H1 (cell line): ENCODE measurements at regions of chr10 and their contacts with region 1.

Region 1: GRCh38 chr10:97914837-97915211 is 65.2 kb downstream of the GOLGA7B start:
- DNase-seq: peak; percentile 46 to 95
- H3K4me3 ChIP-seq: no peak overlapping the region
- H3K27ac ChIP-seq: no peak overlapping the region
- H3K4me1 ChIP-seq: peaks cover 0 to 6% (median 1%) of the 10 kb centered on the region in 4 experiments; a peak in 2 of 7 replicates
- H3K27me3 ChIP-seq: peaks cover 0 to 6% (median 1%) of the 10 kb centered on the region in 4 experiments; a peak in 3 of 7 replicates
- CTCF ChIP-seq: peak; percentile 75 to 97 (median 87)
- EP300 ChIP-seq: 0 out of 3 replicates have a peak, but pooled peaks of 1 of the 2 experiments have one; percentile 24
- POLR2A ChIP-seq: no peak
- RAD21 ChIP-seq: peak; percentile 99

Region 2: DNA sequence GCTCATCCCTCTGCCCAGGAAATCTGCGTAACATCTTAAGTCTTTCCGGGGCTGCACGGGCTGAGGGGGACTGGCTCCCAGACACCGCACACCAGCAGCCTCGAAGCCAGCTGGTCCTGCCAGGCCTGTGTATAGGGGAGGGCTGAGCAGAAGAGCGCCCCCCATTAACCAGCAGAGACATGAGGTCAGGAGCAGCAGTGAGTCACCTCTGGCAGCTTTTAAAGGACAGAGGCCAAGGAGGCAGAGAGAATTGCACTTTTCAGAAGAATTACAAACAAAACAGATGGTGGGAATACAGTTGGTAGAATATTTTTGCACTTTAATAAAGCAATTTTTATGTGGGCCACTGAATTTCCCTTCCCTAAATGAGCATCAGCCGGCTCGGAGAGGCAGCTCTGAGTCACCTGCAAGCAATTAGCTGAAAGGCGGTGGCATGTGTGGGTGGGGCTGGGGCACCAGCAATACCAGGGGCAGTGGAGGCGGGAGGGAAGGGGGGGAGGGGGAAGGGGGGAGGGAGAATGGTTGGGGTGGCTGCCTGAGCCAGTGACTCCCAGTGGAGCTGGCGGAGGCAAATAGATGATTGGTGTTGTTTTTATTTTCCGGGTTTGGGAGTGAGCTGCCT is 26.1 kb before region 1 on chr10:
- CTCF ChIA-PET with region 1: interaction called, 11 read pairs
- POLR2A ChIA-PET with region 1: no interaction called
- DNase-seq: peak in 1 of 2 experiments; percentile 36
- H3K4me3 ChIP-seq: peak overlapping the region in 1 of 4 experiments; percentile 40; a peak in 1 of 8 replicates
- H3K27ac ChIP-seq: no peak overlapping the region
- H3K4me1 ChIP-seq: peaks cover 0 to 18% (median 13%) of the 10 kb centered on the region in 4 experiments; a peak in 6 of 7 replicates
- H3K27me3 ChIP-seq: no peaks in the 10 kb centered on the region; a peak in 1 of 7 replicates
- CTCF ChIP-seq: peak in 1 of 3 experiments; percentile 3; a peak in 1 of 4 replicates
- EP300 ChIP-seq: no peak
- POLR2A ChIP-seq: no peak
- RAD21 ChIP-seq: no peak

Region 3: DNA sequence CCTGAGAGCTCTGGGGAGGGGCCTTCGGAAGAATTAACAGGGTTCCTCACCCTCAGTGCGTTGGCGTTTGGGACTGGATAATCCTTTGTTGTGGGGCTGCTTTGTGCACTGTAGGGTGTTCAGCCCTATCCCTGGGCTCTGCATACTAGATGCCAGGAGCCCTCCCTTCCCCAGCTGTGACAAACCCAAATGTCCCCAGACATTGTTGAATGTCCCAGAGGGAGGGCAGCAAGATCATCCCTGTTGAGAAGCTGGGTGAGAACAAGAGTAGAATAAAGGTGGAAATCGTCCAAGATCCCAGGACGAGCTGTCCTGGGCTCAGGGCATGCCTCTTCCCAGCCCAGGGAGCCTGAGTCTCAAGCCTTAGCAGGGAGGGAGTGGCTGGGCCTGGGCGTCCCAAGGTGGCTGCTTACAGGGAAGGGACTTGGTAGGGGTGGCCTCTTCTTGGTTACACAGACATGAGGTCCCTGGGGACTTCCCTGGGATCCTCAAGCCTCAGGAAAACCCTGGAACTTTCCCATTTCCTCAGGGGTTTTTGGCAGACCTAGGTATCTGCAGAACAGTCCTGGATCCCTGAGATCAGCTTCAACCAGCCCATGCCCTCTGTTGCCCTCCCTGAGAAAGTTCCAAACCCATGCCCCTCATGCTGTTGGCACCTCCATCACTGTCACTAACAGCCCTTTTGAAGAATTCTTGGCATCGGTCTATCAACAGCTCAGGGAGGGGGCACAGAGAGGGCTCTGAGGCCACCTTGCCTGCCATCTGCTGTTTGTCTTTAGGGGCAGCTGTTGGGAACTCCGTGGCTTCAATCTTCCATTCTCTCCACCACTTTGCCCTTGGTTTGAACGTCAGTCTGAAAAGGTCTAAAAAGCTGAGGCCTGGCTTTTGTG is 11.5 kb before region 1 on chr10:
- CTCF ChIA-PET with region 1: interaction called, 16 read pairs
- POLR2A ChIA-PET with region 1: no interaction called
- DNase-seq: no peak
- H3K4me3 ChIP-seq: no peak overlapping the region
- H3K27ac ChIP-seq: no peak overlapping the region
- H3K4me1 ChIP-seq: peaks cover 0 to 4% (median 1%) of the 10 kb centered on the region in 4 experiments; a peak in 3 of 7 replicates
- H3K27me3 ChIP-seq: no peaks in the 10 kb centered on the region; a peak in 2 of 7 replicates
- CTCF ChIP-seq: peak in 1 of 3 experiments; percentile 12; a peak in 1 of 4 replicates
- EP300 ChIP-seq: no peak
- POLR2A ChIP-seq: no peak
- RAD21 ChIP-seq: peak in 1 of 2 experiments; percentile 43; a peak in 2 of 4 replicates

Region 4: DNA sequence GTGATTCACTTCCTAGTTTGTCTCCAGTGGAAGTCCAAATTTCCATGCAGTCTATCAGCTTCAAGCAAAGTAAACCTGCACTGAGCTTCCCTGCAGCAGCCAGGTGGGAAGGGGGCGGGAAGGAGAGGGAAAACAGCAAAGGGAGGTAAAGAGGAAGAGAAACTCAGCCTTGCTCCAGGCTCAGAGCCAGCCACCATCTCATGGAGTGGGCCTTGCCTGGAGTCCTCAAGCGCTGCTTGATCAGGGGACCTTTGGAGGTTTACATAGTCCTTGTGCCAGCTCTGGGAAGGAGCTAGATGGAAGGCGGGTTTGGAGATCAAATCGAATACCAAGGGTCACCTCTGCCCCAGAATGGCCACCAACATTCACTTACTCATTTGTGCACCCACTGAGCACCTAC is 108.2 kb after region 1 on chr10:
- CTCF ChIA-PET with region 1: interaction called, 50 read pairs
- POLR2A ChIA-PET with region 1: no interaction called
- DNase-seq: no peak
- H3K4me3 ChIP-seq: no peak overlapping the region
- H3K27ac ChIP-seq: no peak overlapping the region
- H3K4me1 ChIP-seq: peaks cover 0 to 6% (median under 1%) of the 10 kb centered on the region in 4 experiments; a peak in 2 of 7 replicates
- H3K27me3 ChIP-seq: peaks cover 0 to 6% (median under 1%) of the 10 kb centered on the region in 4 experiments; a peak in 2 of 7 replicates
- CTCF ChIP-seq: no peak
- EP300 ChIP-seq: no peak
- POLR2A ChIP-seq: no peak
- RAD21 ChIP-seq: no peak

Region 5: GRCh38 chr10:98038288-98038687 is 123.5 kb after region 1 on chr10:
- CTCF ChIA-PET with region 1: interaction called, 246 read pairs
- POLR2A ChIA-PET with region 1: interaction called, 3 read pairs
- DNase-seq: peak; percentile 39 to 70
- H3K4me3 ChIP-seq: no peak overlapping the region
- H3K27ac ChIP-seq: no peak overlapping the region
- H3K4me1 ChIP-seq: peaks cover 2 to 8% (median 3%) of the 10 kb centered on the region in 4 experiments; a peak in 4 of 7 replicates
- H3K27me3 ChIP-seq: peaks cover 12 to 58% (median 44%) of the 10 kb centered on the region in 4 experiments
- CTCF ChIP-seq: no peak
- EP300 ChIP-seq: no peak
- POLR2A ChIP-seq: no peak
- RAD21 ChIP-seq: 0 out of 4 replicates have a peak, but pooled peaks have one; percentile 3 to 20